Ovary (tissue), 10 donors: ENCODE measurements at regions of chr15 and their contacts with region 1.

Region 1: DNA sequence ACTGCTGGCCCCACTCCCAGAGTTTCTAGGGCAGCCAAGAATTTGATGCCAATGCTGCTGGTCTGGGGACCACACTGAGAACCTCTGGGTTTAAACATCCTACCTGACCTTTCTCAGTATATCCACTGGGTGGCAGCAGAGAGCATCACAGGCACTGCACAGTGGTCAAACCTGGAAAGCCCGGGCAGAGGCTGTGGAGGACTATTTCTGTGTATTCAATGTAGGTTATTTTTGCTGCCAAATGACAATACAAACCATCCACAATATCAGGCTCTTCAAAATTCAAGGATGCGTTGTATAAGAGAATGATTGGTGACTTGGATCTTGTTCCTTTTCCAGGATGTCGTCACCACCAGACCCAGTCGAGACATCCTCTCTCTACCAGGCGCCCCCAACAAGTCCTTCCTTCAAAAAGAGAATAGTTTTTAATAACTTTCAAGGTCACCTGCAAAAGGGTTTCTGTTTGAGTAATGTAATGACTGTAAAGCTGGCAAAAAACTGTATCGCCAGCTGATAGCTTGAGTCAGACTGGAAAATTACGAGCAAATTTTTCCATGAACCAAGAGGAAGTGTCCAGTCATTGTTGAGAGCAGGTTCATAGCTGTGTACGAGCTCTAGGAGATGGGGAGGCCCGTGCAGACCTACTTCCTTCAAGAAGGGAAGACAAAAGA is 30.5 kb upstream of the MYZAP start:
- DNase-seq: peak; percentile 75 to 81 (median 78)
- H3K4me3 ChIP-seq: no peak overlapping the region
- H3K27ac ChIP-seq: no peak overlapping the region
- H3K4me1 ChIP-seq: no peaks in the 10 kb centered on the region
- H3K27me3 ChIP-seq: no peaks in the 10 kb centered on the region
- CTCF ChIP-seq: peak; percentile 74 to 94 (median 82)
- EP300 ChIP-seq: no peak
- POLR2A ChIP-seq: no peak

Region 2: DNA sequence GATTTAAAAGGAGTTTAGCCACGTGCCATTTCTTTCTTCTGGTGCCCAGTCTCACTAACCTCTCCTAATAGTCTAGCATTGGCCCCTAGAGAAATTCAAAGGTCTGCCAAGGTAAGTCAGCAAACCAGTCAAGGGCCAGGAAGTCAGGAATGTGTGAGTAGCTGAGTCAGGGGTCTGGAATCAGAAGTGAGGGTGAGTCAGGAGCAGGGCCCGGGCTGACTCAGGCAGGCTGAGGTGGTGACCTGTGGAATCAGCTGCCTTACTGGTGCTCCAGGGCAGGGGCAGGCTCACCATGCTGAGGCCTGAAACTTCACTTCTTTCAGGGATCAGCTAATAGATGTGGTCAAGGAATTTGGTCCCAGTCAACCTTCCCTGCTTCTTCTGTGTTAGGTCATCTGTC is 75.3 kb before region 1 on chr15:
- intact Hi-C with region 1: no loop called
- DNase-seq: no peak
- H3K4me3 ChIP-seq: no peak overlapping the region
- H3K27ac ChIP-seq: no peak overlapping the region
- H3K4me1 ChIP-seq: no peaks in the 10 kb centered on the region
- H3K27me3 ChIP-seq: no peaks in the 10 kb centered on the region
- CTCF ChIP-seq: no peak
- EP300 ChIP-seq: no peak
- POLR2A ChIP-seq: no peak

Region 3: DNA sequence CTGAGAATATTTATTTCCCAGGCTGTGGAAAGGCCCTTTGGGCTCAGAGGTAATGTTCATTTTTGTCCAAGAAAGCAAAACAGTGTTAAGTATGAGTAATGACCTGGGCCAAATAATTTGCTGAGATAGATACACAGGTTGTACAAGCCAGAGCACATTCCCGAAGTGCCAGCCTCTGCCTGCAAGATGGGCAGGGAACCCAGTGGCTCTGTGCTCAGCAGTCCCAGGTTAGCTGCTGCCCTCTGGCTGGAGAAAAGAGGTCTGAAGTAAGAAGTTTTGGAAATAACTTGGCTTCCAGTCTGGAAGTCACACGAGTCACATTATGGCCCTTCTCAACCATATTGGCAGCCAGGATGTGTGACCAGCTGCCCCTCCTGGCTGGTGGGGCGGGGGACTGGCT is 50.8 kb after region 1 on chr15:
- intact Hi-C with region 1: loop called in 2 of 4 experiments (anchors 2 to 10 kb)
- DNase-seq: peak in 3 of 5 donors; percentile 28 to 50 (median 41)
- H3K4me3 ChIP-seq: no peak overlapping the region
- H3K27ac ChIP-seq: no peak overlapping the region
- H3K4me1 ChIP-seq: peaks cover 7% of the 10 kb centered on the region
- H3K27me3 ChIP-seq: no peaks in the 10 kb centered on the region
- CTCF ChIP-seq: no peak
- EP300 ChIP-seq: no peak
- POLR2A ChIP-seq: no peak

Region 4: GRCh38 chr15:57720867-57721266 is 159.7 kb after region 1 on chr15:
- intact Hi-C with region 1: loop called in 1 of 4 experiments (anchors 10 kb)
- DNase-seq: no peak
- H3K4me3 ChIP-seq: no peak overlapping the region
- H3K27ac ChIP-seq: no peak overlapping the region
- H3K4me1 ChIP-seq: no peaks in the 10 kb centered on the region
- H3K27me3 ChIP-seq: no peaks in the 10 kb centered on the region
- CTCF ChIP-seq: no peak
- EP300 ChIP-seq: no peak
- POLR2A ChIP-seq: no peak

Region 5: DNA sequence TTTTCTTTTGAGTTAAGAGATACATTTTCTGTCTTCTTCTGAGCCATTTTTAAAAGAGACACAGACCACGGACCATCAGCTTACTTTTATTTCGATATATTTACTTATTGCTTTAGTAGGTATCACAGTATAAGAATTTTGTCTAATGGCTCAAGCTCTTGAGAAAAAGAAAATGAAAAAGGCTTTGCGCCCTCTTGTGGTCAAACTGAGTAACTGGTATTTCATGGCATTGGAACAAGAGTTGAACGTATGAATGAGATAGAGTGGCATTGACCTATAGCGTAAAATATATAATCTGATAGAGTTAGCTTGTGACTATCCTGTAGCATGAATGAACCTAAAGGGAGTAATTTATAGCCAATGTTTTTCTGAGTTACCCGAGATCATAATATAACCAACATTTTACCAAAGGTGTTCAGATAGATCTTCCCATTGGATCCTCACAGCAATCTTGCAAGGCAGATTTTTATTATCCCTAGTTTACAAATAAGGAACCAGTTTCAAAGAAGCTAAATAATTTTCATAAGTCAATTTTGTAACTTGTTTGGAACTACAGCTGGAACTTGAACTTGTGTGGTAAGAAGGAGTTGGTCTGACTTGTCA is 300.0 kb after region 1 on chr15:
- intact Hi-C with region 1: loop called in 2 of 4 experiments (anchors 10 kb)
- DNase-seq: no peak
- H3K4me3 ChIP-seq: no peak overlapping the region
- H3K27ac ChIP-seq: no peak overlapping the region
- H3K4me1 ChIP-seq: no peaks in the 10 kb centered on the region
- H3K27me3 ChIP-seq: no peaks in the 10 kb centered on the region
- CTCF ChIP-seq: peak; percentile 40 to 56 (median 48)
- EP300 ChIP-seq: no peak
- POLR2A ChIP-seq: no peak

Region 6: GRCh38 chr15:57866149-57866736 is 305.1 kb after region 1 on chr15:
- intact Hi-C with region 1: loop called in 1 of 4 experiments (anchors 10 kb)
- DNase-seq: peak in 3 of 5 donors; percentile 28 to 60 (median 30)
- H3K4me3 ChIP-seq: no peak overlapping the region
- H3K27ac ChIP-seq: no peak overlapping the region
- H3K4me1 ChIP-seq: no peaks in the 10 kb centered on the region
- H3K27me3 ChIP-seq: no peaks in the 10 kb centered on the region
- CTCF ChIP-seq: no peak
- EP300 ChIP-seq: no peak
- POLR2A ChIP-seq: no peak

Region 7: GRCh38 chr15:57911247-57911646 is 350.1 kb after region 1 on chr15:
- intact Hi-C with region 1: no loop called
- DNase-seq: peak in 2 of 5 donors; percentile 34 to 73
- H3K4me3 ChIP-seq: no peak overlapping the region
- H3K27ac ChIP-seq: no peak overlapping the region
- H3K4me1 ChIP-seq: peaks cover 15% of the 10 kb centered on the region
- H3K27me3 ChIP-seq: no peaks in the 10 kb centered on the region
- CTCF ChIP-seq: no peak
- EP300 ChIP-seq: no peak
- POLR2A ChIP-seq: no peak